ENCODE measurements at regions of chr20 and their contacts with region 1.

Region 1: DNA sequence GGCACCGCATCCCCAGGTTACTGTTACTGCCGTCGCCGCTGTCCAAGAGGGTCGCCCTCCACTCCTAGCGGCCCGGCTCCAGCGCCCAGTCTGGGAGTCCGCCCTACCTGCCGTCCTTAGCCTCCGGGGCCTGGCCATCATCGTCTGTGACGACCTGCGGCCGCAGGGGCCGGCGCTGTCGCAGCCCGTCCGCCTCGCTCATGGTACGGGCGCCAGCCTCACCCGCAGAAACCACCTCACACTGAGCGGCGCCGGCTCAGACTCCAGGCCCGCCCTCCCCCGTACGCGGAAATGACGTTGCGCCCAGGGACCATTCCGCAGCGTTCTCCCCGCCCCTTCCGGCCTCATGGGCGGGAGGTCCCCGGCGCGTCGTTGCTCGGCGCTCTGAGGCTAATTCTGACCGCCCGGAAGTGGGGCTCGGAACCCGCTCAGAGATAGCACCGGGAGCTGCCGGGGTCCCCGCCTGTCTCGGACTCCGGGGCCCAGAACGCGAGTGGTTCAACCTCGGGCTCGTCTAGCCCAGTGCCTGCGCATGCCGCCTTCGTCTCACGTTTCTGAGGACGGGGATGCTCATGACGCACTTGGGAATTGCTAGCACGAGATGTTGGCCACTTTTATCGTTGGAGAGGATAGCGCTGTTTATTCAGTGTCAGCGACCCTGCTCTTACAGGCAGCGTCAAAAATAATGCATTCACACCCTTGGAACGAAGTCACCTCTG is at the start of gene APMAP:
- DNase-seq: peak; percentile 97
- H3K4me3 Mint-ChIP-seq: peak within 1 kb of the TSS; percentile 89
- H3K27ac Mint-ChIP-seq: peak within 1 kb of the TSS; percentile 90
- H3K4me1 Mint-ChIP-seq: peaks cover 57% of the 10 kb centered on the region
- H3K27me3 Mint-ChIP-seq: no peaks in the 10 kb centered on the region
- total RNA-seq, gene APMAP: 46.9 to 50.9 TPM

Region 2: DNA sequence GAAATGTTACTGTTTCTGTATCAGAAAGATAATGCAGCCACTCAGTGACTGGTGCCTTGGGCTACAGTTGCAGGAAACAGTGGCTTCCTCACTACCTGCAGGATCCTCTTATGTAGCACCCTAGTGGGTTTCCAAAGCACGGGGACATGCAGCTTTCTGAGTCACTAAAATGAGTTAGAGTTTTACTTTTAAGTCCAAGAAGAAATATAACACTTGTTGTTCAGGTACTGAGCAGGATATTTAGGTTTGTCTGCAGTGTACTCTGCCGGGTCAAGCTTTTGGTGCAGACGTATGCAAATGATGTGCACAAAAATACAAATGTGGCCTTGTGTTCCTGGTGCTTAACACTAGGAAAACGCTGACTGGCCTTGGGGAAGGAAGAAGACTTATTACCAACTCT is 43.3 kb after region 1 on chr20:
- CTCF ChIA-PET with region 1: interaction called, 8 read pairs
- intact Hi-C with region 1: loop called (anchors 1 kb)
- DNase-seq: peak; percentile 55
- H3K4me3 Mint-ChIP-seq: peak overlapping the region; percentile 23
- H3K27ac Mint-ChIP-seq: peak overlapping the region; percentile 26
- H3K4me1 Mint-ChIP-seq: peaks cover 46% of the 10 kb centered on the region
- H3K27me3 Mint-ChIP-seq: no peaks in the 10 kb centered on the region

Region 3: GRCh38 chr20:25077610-25078169 is 85.0 kb after region 1 on chr20:
- CTCF ChIA-PET with region 1: interaction called, 10 read pairs
- intact Hi-C with region 1: no loop called
- DNase-seq: peak; percentile 23
- H3K4me3 Mint-ChIP-seq: no peak overlapping the region
- H3K27ac Mint-ChIP-seq: no peak overlapping the region
- H3K4me1 Mint-ChIP-seq: peaks cover 17% of the 10 kb centered on the region
- H3K27me3 Mint-ChIP-seq: peaks cover 56% of the 10 kb centered on the region

Region 4: DNA sequence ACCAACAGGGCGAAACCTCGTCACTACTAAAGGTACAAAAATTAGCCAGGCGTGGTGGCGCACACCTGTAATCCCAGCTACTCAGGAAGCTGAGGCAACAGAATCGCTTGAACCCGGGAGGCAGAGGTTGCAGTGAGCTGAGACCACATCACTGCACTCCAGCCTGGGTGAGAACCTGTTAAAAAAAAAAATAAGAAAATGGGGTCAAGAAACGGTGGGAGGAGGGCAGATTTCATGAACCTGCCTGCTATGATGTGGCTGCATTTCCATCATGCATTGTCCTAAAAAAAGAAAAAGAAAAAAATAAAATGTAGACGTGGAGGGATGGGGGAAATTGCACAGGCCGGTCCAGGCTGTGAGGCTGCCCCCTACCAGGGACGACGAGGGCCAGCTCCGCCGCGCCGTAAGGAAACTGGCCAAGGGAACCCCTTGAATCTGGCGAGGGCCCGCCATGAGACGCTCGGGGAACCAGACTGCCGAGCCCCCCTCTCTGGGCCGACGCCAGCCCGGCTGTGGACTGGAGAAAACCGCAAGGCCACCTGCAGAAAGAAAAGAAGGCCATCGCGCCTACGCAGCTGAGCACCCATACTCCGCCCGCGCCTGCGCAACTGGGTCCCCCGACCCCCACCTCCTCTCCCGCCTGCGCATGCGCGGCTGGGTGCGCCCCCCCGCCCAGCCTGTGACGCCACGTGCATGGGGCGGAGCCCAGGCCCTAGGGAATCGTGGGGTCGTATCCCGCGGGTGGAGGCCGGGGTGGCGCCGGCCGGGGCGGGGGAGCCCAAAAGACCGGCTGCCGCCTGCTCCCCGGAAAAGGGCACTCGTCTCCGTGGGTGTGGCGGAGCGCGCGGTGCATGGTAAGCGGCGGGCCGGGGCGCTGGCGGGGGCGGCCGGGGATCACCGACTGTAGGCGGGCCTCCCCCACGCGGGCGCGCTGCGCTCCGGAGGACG is 202.6 kb after region 1 on chr20 and contains the start of gene ENTPD6:
- CTCF ChIA-PET with region 1: interaction called, 6 read pairs
- intact Hi-C with region 1: loop called (anchors 1 kb)
- DNase-seq: peak; percentile 88
- H3K4me3 Mint-ChIP-seq: peak within 1 kb of the TSS; percentile 88
- H3K27ac Mint-ChIP-seq: peak within 1 kb of the TSS; percentile 72
- H3K4me1 Mint-ChIP-seq: peaks cover 41% of the 10 kb centered on the region
- H3K27me3 Mint-ChIP-seq: no peaks in the 10 kb centered on the region
- total RNA-seq, gene ENTPD6: 63.6 to 66.6 TPM

Region 5: GRCh38 chr20:25310268-25310920 is 317.7 kb after region 1 on chr20:
- CTCF ChIA-PET with region 1: no interaction called
- intact Hi-C with region 1: loop called (anchors 1 kb)
- DNase-seq: peak; percentile 81
- H3K4me3 Mint-ChIP-seq: peak overlapping the region; percentile 56
- H3K27ac Mint-ChIP-seq: peak overlapping the region; percentile 76
- H3K4me1 Mint-ChIP-seq: peaks cover 31% of the 10 kb centered on the region
- H3K27me3 Mint-ChIP-seq: no peaks in the 10 kb centered on the region

Region 6: DNA sequence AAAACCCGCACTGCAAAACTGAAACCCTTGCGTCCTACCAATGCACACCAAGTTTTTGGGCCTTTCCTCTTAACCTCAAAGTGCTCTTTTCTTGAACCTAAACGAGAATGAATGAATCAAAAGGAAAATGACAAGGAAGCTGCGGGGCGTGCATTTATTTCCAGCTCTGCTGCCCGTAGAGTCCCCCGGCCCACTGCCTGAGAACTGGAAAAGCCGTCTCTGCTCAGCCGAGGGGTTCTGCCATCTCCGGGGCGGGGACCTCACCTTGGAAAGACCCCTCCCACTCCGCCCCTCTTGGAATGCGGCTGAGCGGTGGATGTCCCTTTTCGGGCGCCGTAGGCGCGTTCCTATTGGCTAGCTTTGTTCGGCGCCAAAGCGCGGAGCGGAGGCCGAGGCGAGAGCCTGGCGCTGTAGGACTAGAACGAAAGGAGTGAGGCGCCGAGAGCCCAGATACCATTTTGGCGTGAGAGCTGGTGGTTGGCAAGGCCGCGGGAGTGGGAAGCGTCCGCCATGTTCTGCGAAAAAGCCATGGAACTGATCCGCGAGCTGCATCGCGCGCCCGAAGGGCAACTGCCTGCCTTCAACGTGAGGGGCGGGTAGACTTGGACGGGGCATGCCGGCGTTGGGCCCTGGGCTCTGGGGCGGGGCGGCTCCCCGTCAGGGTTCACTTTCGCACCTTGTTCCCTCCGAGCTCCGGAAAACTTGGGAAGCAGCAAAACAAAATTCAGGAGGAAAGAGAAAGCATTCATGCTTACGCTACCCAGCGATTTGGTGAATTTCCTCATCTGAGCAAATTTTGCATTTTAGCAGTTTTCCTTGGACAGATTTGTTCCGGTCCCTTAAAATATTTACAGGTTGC is 414.9 kb after region 1 on chr20 and contains the start of gene GINS1:
- CTCF ChIA-PET with region 1: no interaction called
- intact Hi-C with region 1: loop called (anchors 2 kb)
- DNase-seq: peak; percentile 92
- H3K4me3 Mint-ChIP-seq: peak within 1 kb of the TSS; percentile 92
- H3K27ac Mint-ChIP-seq: peak within 1 kb of the TSS; percentile 91
- H3K4me1 Mint-ChIP-seq: peaks cover 17% of the 10 kb centered on the region
- H3K27me3 Mint-ChIP-seq: no peaks in the 10 kb centered on the region
- total RNA-seq, gene GINS1: 25.5 to 27.7 TPM

Measured in activated naive CD4-positive, alpha-beta T cell treated with anti-CD3 and anti-CD28 coated beads for 36 hours (primary cell).